Activated CD8-positive, alpha-beta T cell treated with anti-CD3 and anti-CD28 coated beads, Interleukin-2, amount 10 ng/mL, durations not matched to agents 7 days and 5 days (primary cell): ENCODE measurements at regions of chr1 and their contacts with region 1.

Region 1: GRCh38 chr1:43934101-43934985 is 742 bp downstream of the ARTN start:
- DNase-seq: peak; percentile 70
- ATAC-seq: peak; percentile 64
- H3K4me3 Mint-ChIP-seq: no peak overlapping the region
- H3K27ac Mint-ChIP-seq: no peak overlapping the region
- H3K4me1 Mint-ChIP-seq: peaks cover 23% of the 10 kb centered on the region
- H3K27me3 Mint-ChIP-seq: peaks cover 20% of the 10 kb centered on the region

Region 2: GRCh38 chr1:43650310-43651085 is 283.8 kb before region 1 on chr1:
- CTCF ChIA-PET with region 1: interaction called, 20 read pairs
- POLR2A ChIA-PET with region 1: no interaction called
- DNase-seq: peak; percentile 96
- ATAC-seq: peak; percentile 82
- H3K4me3 Mint-ChIP-seq: peak overlapping the region; percentile 98
- H3K27ac Mint-ChIP-seq: peak overlapping the region; percentile 91
- H3K4me1 Mint-ChIP-seq: peaks cover 25% of the 10 kb centered on the region
- H3K27me3 Mint-ChIP-seq: peaks cover 4% of the 10 kb centered on the region

Region 3: DNA sequence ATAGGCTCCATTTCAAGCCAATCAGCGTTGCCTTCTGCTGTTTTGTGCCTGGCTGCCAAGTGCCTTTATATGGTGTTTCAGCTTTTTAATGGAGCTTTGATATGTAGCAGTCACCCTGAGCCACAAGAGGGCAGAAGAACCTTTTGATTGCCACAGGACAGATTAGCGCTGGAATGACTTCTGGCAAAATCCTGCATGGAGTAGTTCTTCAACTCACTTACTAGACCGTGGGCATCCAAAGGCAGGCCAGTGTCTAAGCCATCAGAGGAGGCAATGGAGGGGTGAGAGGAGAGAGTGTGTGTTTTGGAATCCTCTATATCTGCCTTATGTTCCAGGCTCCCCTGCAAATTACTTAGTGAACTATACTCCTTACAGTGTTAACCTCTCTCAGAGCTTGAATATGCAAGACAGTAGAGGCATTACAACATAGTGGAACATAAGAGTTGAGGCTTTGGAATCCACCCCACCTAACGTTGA is 170.8 kb before region 1 on chr1:
- CTCF ChIA-PET with region 1: interaction called, 506 read pairs
- POLR2A ChIA-PET with region 1: interaction called, 3 read pairs
- DNase-seq: peak; percentile 64
- ATAC-seq: peak; percentile 78
- H3K4me3 Mint-ChIP-seq: no peak overlapping the region
- H3K27ac Mint-ChIP-seq: no peak overlapping the region
- H3K4me1 Mint-ChIP-seq: no peaks in the 10 kb centered on the region
- H3K27me3 Mint-ChIP-seq: no peaks in the 10 kb centered on the region

Region 4: GRCh38 chr1:43849670-43850069 is 84.7 kb before region 1 on chr1:
- CTCF ChIA-PET with region 1: interaction called, 14 read pairs
- POLR2A ChIA-PET with region 1: no interaction called
- DNase-seq: no peak
- ATAC-seq: no peak
- H3K4me3 Mint-ChIP-seq: no peak overlapping the region
- H3K27ac Mint-ChIP-seq: no peak overlapping the region
- H3K4me1 Mint-ChIP-seq: peaks cover 21% of the 10 kb centered on the region
- H3K27me3 Mint-ChIP-seq: no peaks in the 10 kb centered on the region

Region 5: DNA sequence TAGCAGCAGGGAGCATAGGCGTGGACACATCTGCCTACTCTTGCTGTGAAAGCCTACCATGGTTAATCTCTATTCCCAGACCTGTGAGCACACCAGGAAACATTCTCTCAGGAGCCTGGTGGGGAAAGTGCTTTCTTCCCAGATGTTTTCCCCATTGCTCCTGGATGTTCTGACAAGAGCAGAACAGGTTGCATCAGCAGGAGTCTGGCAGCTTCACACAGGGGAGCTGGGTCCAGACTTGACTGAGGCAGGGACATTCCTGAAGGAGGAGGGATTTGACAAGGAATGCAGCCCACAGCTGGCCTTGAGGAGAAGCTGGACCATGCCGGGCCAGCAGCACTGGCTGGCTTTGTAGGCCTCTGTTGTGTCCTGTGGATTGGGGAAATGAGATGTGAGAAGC is 21.7 kb before region 1 on chr1:
- CTCF ChIA-PET with region 1: interaction called, 49 read pairs
- POLR2A ChIA-PET with region 1: no interaction called
- DNase-seq: no peak
- ATAC-seq: no peak
- H3K4me3 Mint-ChIP-seq: no peak overlapping the region
- H3K27ac Mint-ChIP-seq: no peak overlapping the region
- H3K4me1 Mint-ChIP-seq: no peaks in the 10 kb centered on the region
- H3K27me3 Mint-ChIP-seq: no peaks in the 10 kb centered on the region

Region 6: DNA sequence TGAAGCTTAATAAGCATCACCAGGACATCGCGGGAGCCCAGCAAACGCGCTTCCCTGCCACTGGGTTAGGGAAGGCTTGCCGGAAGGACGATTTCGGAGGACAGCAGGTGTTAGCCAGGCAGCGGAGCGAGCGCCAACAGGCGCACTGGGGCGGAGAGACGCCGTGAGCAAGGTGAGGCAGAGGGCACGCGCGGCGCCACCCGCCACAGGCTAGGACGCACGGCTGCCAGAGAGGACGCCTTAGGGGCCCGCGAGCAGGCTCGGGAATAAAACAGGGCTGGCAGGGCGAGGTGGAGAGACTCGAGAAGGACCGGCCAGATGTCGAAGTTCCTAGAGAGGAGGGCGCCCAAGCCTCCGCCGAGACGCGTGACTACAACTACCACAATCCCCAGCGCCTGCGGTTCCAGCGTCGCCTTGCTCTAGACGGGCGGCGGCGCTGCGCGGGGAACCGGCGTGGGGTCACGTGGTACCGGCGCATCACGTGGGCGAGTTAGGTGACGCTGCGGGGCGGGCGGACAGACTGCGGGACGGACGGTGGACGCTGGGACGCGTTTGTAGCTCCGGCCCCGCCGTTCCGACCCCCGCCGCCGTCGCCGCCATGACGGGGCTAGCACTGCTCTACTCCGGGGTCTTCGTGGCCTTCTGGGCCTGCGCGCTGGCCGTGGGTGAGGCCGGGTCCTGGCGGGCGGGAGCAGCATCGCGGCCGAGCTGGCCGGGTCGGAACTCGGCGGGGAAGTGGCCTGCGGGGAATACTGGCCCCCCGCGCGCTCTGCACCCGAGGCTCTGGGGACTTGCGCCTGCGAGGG is 40.3 kb after region 1 on chr1 and contains the start of gene ATP6V0B:
- CTCF ChIA-PET with region 1: interaction called, 10 read pairs
- POLR2A ChIA-PET with region 1: no interaction called
- DNase-seq: peak; percentile 97
- ATAC-seq: peak; percentile 77
- H3K4me3 Mint-ChIP-seq: peak within 1 kb of the TSS; percentile 89
- H3K27ac Mint-ChIP-seq: peak within 1 kb of the TSS; percentile 89
- H3K4me1 Mint-ChIP-seq: peaks cover 58% of the 10 kb centered on the region
- H3K27me3 Mint-ChIP-seq: no peaks in the 10 kb centered on the region
- total RNA-seq, gene ATP6V0B: 116 to 117 TPM